ENCODE measurements at regions of chr1 and their contacts with region 1.

Region 1: GRCh38 chr1:31705080-31705866 is 1.5 kb upstream of the COL16A1 start:
- DNase-seq: peak in 8 of 10 donors; percentile 44 to 73 (median 60)
- H3K4me3 ChIP-seq: peak overlapping the region in 23 of 59 donors; percentile 1 to 66 (median 52)
- H3K27ac ChIP-seq: peak overlapping the region in 28 of 59 donors; percentile 1 to 97 (median 78)
- H3K27me3 ChIP-seq: no peaks in the 10 kb centered on the region
- CTCF ChIP-seq: peak in 52 of 56 donors; percentile 7 to 79 (median 54)

Region 2: GRCh38 chr1:31663622-31664452 is 41.4 kb before region 1 on chr1:
- intact Hi-C with region 1: loop called (anchors 1 to 2 kb)
- DNase-seq: peak in 9 of 10 donors; percentile 39 to 83 (median 69)
- H3K4me3 ChIP-seq: no peak overlapping the region
- H3K27ac ChIP-seq: peak overlapping the region in 1 of 59 donors; percentile 18
- H3K27me3 ChIP-seq: no peaks in the 10 kb centered on the region
- CTCF ChIP-seq: peak; percentile 68 to 96 (median 88)

Measured in dorsolateral prefrontal cortex (tissue), 120 donors.